ENCODE measurements at regions of chr3 and their contacts with region 1.

Region 1: GRCh38 chr3:25033407-25034029 is 394.5 kb upstream of the RARB start:
- DNase-seq: peak; percentile 60 to 74
- ATAC-seq: peak; percentile 78 to 94; a peak in 5 of 6 replicates
- H3K4me3 ChIP-seq: no peak overlapping the region
- H3K27ac ChIP-seq: no peak overlapping the region
- H3K4me1 ChIP-seq: 0 out of 3 replicates have a peak, but pooled peaks cover 3% of the 10 kb centered on the region
- CTCF ChIP-seq: peak; percentile 57
- EP300 ChIP-seq: no peak
- POLR2A ChIP-seq: no peak
- RAD21 ChIP-seq: peak; percentile 27 to 45; a peak in 2 of 5 replicates

Region 2: GRCh38 chr3:25021816-25022215 is 11.7 kb before region 1 on chr3:
- CTCF ChIA-PET with region 1: interaction called, 18 read pairs
- POLR2A ChIA-PET with region 1: no interaction called
- DNase-seq: peak in 1 of 2 experiments; percentile 34
- ATAC-seq: 0 out of 6 replicates have a peak, but pooled peaks have one; percentile 47 to 56
- H3K4me3 ChIP-seq: no peak overlapping the region
- H3K27ac ChIP-seq: no peak overlapping the region
- H3K4me1 ChIP-seq: no peaks in the 10 kb centered on the region
- CTCF ChIP-seq: peak; percentile 41
- EP300 ChIP-seq: no peak
- POLR2A ChIP-seq: no peak
- RAD21 ChIP-seq: peak; percentile 52 to 55

Region 3: GRCh38 chr3:25120665-25121064 is 87.1 kb after region 1 on chr3:
- CTCF ChIA-PET with region 1: no interaction called
- POLR2A ChIA-PET with region 1: no interaction called
- DNase-seq: peak in 1 of 2 experiments; percentile 1
- ATAC-seq: no peak
- H3K4me3 ChIP-seq: no peak overlapping the region
- H3K27ac ChIP-seq: no peak overlapping the region
- H3K4me1 ChIP-seq: no peaks in the 10 kb centered on the region
- CTCF ChIP-seq: no peak
- EP300 ChIP-seq: no peak
- POLR2A ChIP-seq: no peak
- RAD21 ChIP-seq: no peak

Region 4: DNA sequence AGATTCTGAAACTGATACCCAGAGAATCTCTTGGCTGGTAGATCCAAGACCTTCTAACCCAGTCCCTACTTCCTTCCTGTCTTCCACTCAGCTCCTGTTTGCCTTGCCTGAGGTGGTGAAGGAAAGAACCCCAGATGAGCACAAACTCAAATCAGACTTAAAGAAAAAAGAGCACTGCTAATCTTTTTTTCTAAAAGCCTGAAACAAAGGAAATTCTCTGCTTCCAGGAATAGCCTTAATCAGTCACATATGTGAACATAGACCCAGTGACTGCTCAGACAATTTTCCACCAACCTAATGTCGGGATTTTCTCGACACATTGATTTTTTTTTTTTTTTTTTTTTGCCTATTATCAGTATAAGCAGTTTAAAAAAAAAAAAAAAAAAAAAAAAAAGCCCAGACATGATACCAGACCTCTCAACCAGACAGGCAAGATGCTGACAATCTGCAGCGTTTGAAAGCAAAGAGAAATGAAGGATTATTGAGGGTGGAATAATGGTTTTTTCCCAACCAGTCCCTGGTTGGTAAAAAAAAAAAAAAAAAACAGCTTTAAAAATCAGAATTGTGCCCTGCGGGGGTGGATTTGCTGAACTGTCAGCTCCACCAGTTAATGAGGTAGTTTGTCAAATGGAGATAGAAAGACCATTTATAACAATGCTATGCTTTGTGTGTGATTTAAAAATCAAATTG is 137.7 kb after region 1 on chr3:
- CTCF ChIA-PET with region 1: no interaction called
- POLR2A ChIA-PET with region 1: no interaction called
- DNase-seq: no peak
- ATAC-seq: no peak
- H3K4me3 ChIP-seq: no peak overlapping the region
- H3K27ac ChIP-seq: no peak overlapping the region
- H3K4me1 ChIP-seq: no peaks in the 10 kb centered on the region
- CTCF ChIP-seq: no peak
- EP300 ChIP-seq: no peak
- POLR2A ChIP-seq: no peak
- RAD21 ChIP-seq: no peak

Measured in A549 (cell line).